Colonic mucosa (tissue), 4 donors: ENCODE measurements at regions of chr12 and their contacts with region 1.

Region 1: GRCh38 chr12:28172434-28173030 is 17.7 kb upstream of the CCDC91 start:
- DNase-seq: peak; percentile 33
- H3K4me3 ChIP-seq: no peak overlapping the region
- H3K27ac ChIP-seq: no peak overlapping the region
- H3K4me1 ChIP-seq: no peaks in the 10 kb centered on the region
- H3K27me3 ChIP-seq: no peaks in the 10 kb centered on the region
- CTCF ChIP-seq: peak; percentile 46

Region 2: GRCh38 chr12:27969624-27970400 is 202.7 kb before region 1 on chr12:
- intact Hi-C with region 1: loop called (anchors 10 kb)
- DNase-seq: peak; percentile 40
- H3K4me3 ChIP-seq: peak overlapping the region; percentile 39
- H3K27ac ChIP-seq: no peak overlapping the region
- H3K4me1 ChIP-seq: peaks cover 4% of the 10 kb centered on the region
- H3K27me3 ChIP-seq: peaks cover 54% of the 10 kb centered on the region
- CTCF ChIP-seq: no peak